Right cardiac atrium (tissue), 5 donors: ENCODE measurements at regions of chr6 and their contacts with region 1.

Region 1: GRCh38 chr6:73631849-73632248 is 21.9 kb downstream of the SLC17A5 start:
- DNase-seq: no peak
- ATAC-seq: no peak
- H3K4me3 ChIP-seq: no peak overlapping the region
- H3K27ac ChIP-seq: no peak overlapping the region
- H3K4me1 ChIP-seq: no peaks in the 10 kb centered on the region
- H3K27me3 ChIP-seq: no peaks in the 10 kb centered on the region

Region 2: DNA sequence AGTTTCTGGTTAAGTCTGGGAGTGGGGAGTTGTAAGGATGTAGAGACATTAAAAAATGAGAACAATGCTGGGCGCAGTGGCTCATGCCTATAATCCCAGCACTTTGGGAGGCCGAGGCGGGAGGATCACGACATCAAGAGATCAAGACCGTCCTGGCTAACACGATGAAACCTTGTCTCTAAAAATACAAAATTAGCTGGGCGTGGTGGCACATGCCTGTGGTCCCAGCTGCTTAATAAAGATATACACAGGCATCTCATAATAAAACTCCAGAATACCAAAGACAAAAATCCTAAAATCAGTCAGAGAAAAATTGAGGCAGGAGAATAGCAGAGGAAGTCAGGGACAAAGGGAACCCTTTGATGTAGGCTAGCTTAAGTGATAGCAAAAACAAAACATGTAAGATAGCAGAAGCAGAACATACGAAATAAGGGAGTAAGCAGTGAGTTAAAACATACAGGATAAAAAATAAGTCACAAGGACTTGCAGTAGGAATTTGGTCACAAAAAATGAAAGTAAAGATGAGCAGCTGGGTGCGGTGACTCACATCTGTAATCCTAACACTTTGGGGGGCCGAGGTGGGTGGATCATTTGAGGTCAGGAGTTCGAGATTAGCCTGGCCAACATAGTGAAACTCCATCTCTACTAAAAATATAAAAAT is 213.6 kb before region 1 on chr6:
- intact Hi-C with region 1: no loop called
- DNase-seq: no peak
- ATAC-seq: no peak
- H3K4me3 ChIP-seq: no peak overlapping the region
- H3K27ac ChIP-seq: no peak overlapping the region
- H3K4me1 ChIP-seq: no peaks in the 10 kb centered on the region
- H3K27me3 ChIP-seq: no peaks in the 10 kb centered on the region

Region 3: GRCh38 chr6:73443555-73443954 is 188.3 kb before region 1 on chr6:
- intact Hi-C with region 1: no loop called
- DNase-seq: no peak
- ATAC-seq: no peak
- H3K4me3 ChIP-seq: no peak overlapping the region
- H3K27ac ChIP-seq: no peak overlapping the region
- H3K4me1 ChIP-seq: no peaks in the 10 kb centered on the region
- H3K27me3 ChIP-seq: no peaks in the 10 kb centered on the region

Region 4: DNA sequence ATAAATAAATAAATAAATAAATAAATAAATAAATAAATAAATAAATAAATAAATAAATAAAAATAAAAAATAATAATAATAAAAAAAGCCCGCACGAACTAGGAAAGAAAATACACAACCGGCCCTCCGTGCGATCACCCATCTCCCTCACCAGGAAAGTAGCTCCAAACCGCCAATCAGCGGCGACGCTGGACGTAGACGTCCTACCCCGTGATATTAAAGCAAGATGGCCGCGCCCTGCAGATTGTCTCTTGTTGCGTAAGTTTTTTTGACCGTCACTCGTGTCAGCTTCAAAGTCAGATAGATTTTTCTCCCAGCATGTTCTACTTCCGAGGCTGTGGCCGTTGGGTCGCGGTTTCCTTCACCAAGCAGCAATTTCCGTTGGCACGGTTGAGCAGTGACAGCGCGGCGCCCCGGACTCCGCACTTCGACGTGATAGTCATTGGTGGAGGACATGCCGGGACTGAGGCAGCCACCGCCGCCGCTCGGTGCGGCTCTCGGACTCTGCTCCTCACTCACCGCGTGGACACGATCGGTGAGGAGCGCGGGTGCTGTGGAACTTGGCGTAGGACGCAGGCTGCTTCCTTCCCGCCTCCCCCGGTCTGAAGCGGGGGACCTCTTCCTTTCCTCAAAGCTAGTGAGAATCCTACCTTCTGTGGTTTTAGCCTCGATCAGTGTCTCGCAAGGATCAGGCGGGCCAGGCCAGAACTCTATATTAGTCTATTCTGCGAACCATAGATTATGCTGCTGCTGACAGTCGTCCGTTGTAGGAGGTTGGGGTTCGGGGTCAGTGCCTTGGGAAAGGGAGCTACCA is 170.1 kb before region 1 on chr6 and contains the start of gene MTO1:
- intact Hi-C with region 1: no loop called
- DNase-seq: peak; percentile 93 to 96 (median 93)
- ATAC-seq: peak; percentile 98
- H3K4me3 ChIP-seq: peak within 1 kb of the TSS; percentile 59
- H3K27ac ChIP-seq: peak within 1 kb of the TSS; percentile 98
- H3K4me1 ChIP-seq: peaks cover 5% of the 10 kb centered on the region
- H3K27me3 ChIP-seq: no peaks in the 10 kb centered on the region
- total RNA-seq, gene MTO1: 24.4 to 35.1 (median 30.5) TPM

Region 5: DNA sequence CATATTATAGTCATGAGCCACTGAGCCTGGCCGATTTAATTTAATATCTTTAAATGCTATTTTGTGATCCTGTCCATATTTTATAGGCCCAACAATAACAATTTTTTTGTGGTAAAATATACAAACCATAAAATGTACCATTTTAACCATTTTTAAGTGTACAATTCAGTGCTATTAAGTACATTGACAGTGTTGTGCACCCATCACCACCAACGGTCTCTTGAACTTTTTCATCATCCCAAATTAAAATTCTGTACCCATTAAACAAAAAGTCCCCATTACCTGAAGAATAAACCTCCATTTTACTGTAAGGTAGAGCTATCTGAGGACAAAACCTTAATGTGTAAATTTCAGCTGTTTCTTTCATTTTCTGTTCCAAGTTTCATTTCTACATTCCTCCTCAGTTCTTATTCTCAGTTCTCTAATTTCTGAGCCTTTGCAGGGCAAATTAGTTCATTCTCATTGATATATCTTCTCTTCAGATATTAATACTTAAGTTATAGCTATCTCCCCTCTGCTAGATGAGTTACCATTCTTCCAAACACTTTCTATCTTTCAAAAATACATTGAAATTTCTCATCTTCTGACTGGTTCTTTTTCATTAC is 160.1 kb before region 1 on chr6:
- intact Hi-C with region 1: loop called in 1 of 4 experiments (anchors 10 kb)
- DNase-seq: no peak
- ATAC-seq: no peak
- H3K4me3 ChIP-seq: no peak overlapping the region
- H3K27ac ChIP-seq: no peak overlapping the region
- H3K4me1 ChIP-seq: no peaks in the 10 kb centered on the region
- H3K27me3 ChIP-seq: no peaks in the 10 kb centered on the region

Region 6: GRCh38 chr6:73560182-73560732 is 71.6 kb before region 1 on chr6:
- intact Hi-C with region 1: no loop called
- DNase-seq: no peak
- ATAC-seq: no peak
- H3K4me3 ChIP-seq: no peak overlapping the region
- H3K27ac ChIP-seq: no peak overlapping the region
- H3K4me1 ChIP-seq: no peaks in the 10 kb centered on the region
- H3K27me3 ChIP-seq: no peaks in the 10 kb centered on the region